Activated CD4-positive, alpha-beta T cell treated with anti-CD3 and anti-CD28 coated beads, Interleukin-2, amount 10 ng/mL, durations not matched to agents 24 days and 14 days (primary cell): ENCODE measurements at regions of chr14 and their contacts with region 1.

Region 1: DNA sequence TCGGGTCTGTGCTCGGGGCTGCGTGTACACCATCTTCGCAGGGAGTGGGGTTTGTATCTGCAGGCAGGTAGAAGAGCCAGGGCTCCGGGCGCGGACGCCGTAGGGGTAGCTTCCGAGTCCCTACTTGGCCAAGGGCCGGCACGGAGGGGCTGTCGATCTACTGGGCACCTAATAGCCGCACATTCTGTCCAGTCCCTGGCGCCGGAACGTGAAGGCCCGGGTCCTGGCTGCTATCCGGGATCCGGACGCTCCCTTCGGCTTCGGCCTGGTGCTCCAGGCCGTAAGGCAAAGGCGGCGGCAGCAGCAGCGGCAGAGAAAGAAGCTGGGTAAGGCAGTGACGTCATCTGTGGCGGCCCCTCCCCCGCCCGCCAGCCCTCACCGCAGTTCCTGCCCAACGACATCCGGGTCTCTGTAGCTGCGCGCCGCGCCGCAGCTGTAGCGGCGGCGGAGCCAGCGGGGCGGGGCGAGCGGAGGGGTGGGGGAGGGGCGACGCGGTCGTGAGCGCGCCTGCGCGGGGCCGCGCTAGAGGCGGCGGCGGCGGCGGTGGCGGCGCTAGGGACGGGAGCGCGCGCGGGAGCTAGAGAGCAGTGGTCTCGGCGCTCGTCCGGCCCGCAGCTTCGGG is at the start of gene PPM1A:
- DNase-seq: peak; percentile 97
- H3K4me3 Mint-ChIP-seq: peak within 1 kb of the TSS; percentile 93
- H3K27ac Mint-ChIP-seq: peak within 1 kb of the TSS; percentile 100
- H3K4me1 Mint-ChIP-seq: peaks cover 47% of the 10 kb centered on the region
- H3K27me3 Mint-ChIP-seq: no peaks in the 10 kb centered on the region
- total RNA-seq, gene PPM1A: 42.9 and 43.9 TPM in 2 replicates

Region 2: DNA sequence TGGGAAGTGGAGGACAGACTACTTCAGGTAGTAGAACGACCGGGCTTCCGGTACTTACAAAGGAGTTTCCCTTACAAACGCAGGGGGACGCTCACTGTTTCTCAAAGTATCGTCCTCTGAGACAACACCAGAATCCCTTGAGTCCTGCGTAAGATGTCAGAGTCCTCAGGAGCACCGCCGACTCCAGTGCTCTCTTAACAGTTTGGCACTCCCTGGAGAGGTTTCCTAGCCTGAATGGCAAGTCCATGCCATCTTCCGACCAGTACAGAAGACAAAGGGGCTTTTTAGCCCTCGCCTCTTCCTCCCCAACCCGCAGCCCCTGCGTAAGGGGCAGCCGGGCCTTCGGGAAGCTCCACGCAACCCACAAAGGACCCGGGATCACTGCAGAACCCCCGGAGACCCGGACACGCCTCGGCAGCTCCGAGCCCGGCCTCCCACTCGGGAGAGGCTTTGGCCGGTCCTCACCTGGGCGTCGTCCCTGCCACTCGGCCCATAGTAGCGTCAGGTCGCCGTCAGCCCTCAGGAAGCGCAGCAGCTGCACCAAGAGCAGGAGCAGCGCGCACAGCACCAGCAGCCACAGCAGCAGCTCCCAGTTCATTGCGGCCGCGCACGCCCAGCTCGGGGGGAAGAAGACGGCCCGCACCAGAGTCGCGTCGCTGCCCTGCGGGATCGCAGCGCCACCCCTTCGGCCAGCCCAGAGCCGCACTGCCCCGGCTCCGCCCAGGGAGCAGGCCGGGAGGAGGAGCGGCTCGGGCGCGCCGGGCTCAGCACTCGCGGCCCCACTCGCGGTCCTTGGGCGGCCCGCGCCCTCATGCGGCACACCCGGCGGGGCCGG is 83.9 kb before region 1 on chr14 and contains the start of gene DHRS7:
- intact Hi-C with region 1: loop called (anchors 1 kb)
- DNase-seq: peak; percentile 89
- H3K4me3 Mint-ChIP-seq: peak within 1 kb of the TSS; percentile 98
- H3K27ac Mint-ChIP-seq: peak within 1 kb of the TSS; percentile 99
- H3K4me1 Mint-ChIP-seq: peaks cover 30% of the 10 kb centered on the region
- H3K27me3 Mint-ChIP-seq: no peaks in the 10 kb centered on the region
- total RNA-seq, gene DHRS7: 42.9 TPM in 2 replicates

Region 3: GRCh38 chr14:60195179-60195810 is 53.5 kb before region 1 on chr14:
- intact Hi-C with region 1: no loop called
- DNase-seq: no peak
- H3K4me3 Mint-ChIP-seq: no peak overlapping the region
- H3K27ac Mint-ChIP-seq: no peak overlapping the region
- H3K4me1 Mint-ChIP-seq: peaks cover 6% of the 10 kb centered on the region
- H3K27me3 Mint-ChIP-seq: peaks cover 9% of the 10 kb centered on the region

Region 4: GRCh38 chr14:60226298-60226697 is 22.5 kb before region 1 on chr14:
- intact Hi-C with region 1: no loop called
- DNase-seq: peak; percentile 43
- H3K4me3 Mint-ChIP-seq: no peak overlapping the region
- H3K27ac Mint-ChIP-seq: no peak overlapping the region
- H3K4me1 Mint-ChIP-seq: no peaks in the 10 kb centered on the region
- H3K27me3 Mint-ChIP-seq: peaks cover 4% of the 10 kb centered on the region

Region 5: GRCh38 chr14:60266021-60266937 is 17.5 kb after region 1 on chr14:
- intact Hi-C with region 1: loop called (anchors 2 kb)
- DNase-seq: peak; percentile 64
- H3K4me3 Mint-ChIP-seq: no peak overlapping the region
- H3K27ac Mint-ChIP-seq: no peak overlapping the region
- H3K4me1 Mint-ChIP-seq: peaks cover 6% of the 10 kb centered on the region
- H3K27me3 Mint-ChIP-seq: no peaks in the 10 kb centered on the region

Region 6: DNA sequence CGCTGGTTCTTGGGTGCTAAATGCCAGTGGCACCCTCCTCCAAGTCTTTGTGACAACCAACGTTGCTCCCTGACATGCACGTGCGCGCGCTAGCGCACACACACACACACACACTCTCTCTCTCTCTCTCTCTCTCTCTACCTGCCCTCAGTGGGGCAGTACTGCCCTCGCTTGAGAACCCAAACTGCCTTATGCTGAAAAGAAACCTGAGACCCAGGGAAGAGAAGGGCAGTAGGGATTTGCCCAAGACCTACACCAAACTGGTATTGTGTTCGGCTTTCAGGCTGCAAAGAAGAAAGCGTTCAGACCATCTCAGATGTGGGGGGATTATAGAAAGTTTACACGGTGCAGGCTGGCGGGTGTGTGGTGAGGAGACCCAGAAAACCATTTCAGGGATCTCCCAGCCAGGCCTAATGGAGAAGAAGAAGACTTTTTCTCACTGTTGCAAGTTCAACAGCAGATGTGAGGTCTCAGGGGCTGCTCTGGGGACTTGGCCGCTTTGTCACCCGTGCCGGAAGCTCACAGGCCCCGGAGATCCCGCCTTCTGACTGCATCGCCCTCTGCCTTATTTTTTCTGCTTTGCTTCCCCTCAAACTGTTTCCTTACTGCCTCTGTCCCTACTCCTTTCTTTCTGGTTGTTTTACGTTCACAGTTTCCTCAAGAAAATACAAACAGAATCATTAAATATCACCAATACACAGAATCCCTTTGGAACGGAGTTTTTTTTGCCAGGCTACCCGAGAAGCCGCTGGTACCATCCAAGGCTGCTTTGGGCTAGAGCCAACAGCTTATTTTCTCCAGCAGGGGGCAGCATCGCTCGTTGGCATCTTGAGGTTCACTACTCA is 82.6 kb after region 1 on chr14:
- intact Hi-C with region 1: loop called (anchors 1 kb)
- DNase-seq: peak; percentile 92
- H3K4me3 Mint-ChIP-seq: peak overlapping the region; percentile 97
- H3K27ac Mint-ChIP-seq: peak overlapping the region; percentile 95
- H3K4me1 Mint-ChIP-seq: peaks cover 32% of the 10 kb centered on the region
- H3K27me3 Mint-ChIP-seq: peaks cover 42% of the 10 kb centered on the region